ENCODE measurements at regions of chr12 and their contacts with region 1.

Region 1: DNA sequence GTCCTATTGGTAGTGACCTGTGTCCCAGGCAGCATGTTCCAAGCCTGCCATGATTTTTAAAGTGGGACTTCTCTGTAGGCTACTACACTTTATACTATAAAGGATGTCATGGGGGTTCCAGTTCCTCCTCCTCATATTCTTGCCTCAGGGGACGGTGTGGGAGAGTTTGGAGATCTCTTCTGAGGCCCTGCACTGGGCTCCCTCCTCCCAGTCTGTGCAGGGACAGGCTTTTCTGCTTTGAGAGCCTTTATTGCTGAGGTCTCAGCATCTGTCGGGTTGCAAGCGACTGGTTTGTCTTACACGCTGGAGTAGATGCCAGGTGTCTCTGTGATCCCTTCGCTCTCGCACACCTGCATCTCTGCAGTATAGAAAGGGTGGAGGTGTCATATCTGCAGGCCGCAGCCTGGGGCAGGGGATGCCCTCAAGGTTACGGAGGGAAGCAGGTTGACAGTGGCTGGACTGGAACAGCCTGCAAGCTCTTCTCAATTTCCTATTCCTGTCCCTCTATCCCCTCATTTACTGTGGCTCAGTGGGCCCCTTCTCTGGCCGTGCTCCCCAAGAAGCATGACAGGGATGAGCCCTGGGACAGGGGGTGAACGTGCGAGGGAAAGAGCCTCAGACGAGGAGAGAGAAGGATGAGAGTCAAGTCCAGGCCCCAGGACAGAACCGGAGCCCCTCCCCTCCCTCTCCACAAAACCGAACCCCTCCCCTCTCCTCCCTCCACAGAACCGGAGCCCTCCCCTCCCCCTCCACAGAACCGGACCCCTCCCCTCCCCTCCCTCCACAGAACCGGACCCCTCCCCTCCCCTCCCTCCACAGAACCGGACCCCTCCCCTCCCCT is 51.3 kb downstream of the SLC6A12 start:
- DNase-seq: no peak
- ATAC-seq: no peak
- H3K4me3 ChIP-seq: no peak overlapping the region
- H3K27ac ChIP-seq: no peak overlapping the region
- H3K4me1 ChIP-seq: no peaks in the 10 kb centered on the region
- H3K27me3 ChIP-seq: peaks cover 4% of the 10 kb centered on the region; the same call in 1 of the 2 replicates
- CTCF ChIP-seq: no peak
- POLR2A ChIP-seq: no peak
- RAD21 ChIP-seq: no peak

Region 2: DNA sequence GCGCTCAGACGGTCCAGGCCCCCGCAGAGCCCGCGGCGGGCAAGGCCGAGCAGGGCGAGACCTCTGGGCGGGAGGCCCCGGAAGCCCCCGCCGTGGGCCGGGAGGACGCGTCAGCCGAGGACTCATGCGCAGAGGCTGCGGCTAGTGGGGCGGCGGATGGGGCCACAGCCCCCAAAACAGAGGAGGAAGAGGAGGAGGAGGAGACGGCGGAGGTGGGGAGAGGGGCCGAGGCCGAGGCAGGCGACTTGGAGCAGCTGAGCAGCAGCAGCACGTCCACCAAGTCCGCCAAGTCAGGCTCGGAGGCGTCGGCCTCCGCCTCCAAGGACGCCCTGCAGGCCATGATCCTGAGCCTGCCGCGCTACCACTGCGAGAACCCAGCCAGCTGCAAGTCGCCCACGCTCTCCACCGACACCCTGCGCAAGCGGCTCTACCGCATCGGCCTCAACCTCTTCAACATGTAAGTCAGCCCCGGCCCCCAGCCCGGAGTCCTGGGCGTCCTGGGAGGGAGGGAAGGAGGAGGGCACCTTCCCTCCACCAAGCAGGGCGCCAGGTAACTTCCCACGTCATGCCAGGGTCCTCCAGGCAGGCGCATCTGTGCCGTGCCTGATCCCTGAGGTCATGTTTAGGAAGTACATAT is 23.7 kb before region 1 on chr12:
- CTCF ChIA-PET with region 1: no interaction called
- POLR2A ChIA-PET with region 1: no interaction called
- RAD21 ChIA-PET with region 1: no interaction called
- intact Hi-C with region 1: no loop called
- DNase-seq: no peak
- ATAC-seq: no peak
- H3K4me3 ChIP-seq: no peak overlapping the region
- H3K27ac ChIP-seq: no peak overlapping the region
- H3K4me1 ChIP-seq: no peaks in the 10 kb centered on the region
- H3K27me3 ChIP-seq: peaks cover 4% of the 10 kb centered on the region; the same call in 1 of the 2 replicates
- CTCF ChIP-seq: no peak
- POLR2A ChIP-seq: no peak
- RAD21 ChIP-seq: no peak

Region 3: GRCh38 chr12:214003-214741 is 51.5 kb after region 1 on chr12 and contains the start of gene SLC6A12:
- CTCF ChIA-PET with region 1: no interaction called
- POLR2A ChIA-PET with region 1: no interaction called
- RAD21 ChIA-PET with region 1: no interaction called
- intact Hi-C with region 1: loop called (anchors 2 kb)
- DNase-seq: no peak
- ATAC-seq: no peak
- H3K4me3 ChIP-seq: no peak within 1 kb of the TSS
- H3K27ac ChIP-seq: no peak within 1 kb of the TSS; the same call in 1 of the 2 replicates
- H3K4me1 ChIP-seq: no peaks in the 10 kb centered on the region
- H3K27me3 ChIP-seq: no peaks in the 10 kb centered on the region
- CTCF ChIP-seq: no peak
- POLR2A ChIP-seq: no peak
- RAD21 ChIP-seq: no peak
- total RNA-seq, gene SLC6A12: 0.64 TPM